ENCODE measurements at regions of chr7 and their contacts with region 1.

Region 1: DNA sequence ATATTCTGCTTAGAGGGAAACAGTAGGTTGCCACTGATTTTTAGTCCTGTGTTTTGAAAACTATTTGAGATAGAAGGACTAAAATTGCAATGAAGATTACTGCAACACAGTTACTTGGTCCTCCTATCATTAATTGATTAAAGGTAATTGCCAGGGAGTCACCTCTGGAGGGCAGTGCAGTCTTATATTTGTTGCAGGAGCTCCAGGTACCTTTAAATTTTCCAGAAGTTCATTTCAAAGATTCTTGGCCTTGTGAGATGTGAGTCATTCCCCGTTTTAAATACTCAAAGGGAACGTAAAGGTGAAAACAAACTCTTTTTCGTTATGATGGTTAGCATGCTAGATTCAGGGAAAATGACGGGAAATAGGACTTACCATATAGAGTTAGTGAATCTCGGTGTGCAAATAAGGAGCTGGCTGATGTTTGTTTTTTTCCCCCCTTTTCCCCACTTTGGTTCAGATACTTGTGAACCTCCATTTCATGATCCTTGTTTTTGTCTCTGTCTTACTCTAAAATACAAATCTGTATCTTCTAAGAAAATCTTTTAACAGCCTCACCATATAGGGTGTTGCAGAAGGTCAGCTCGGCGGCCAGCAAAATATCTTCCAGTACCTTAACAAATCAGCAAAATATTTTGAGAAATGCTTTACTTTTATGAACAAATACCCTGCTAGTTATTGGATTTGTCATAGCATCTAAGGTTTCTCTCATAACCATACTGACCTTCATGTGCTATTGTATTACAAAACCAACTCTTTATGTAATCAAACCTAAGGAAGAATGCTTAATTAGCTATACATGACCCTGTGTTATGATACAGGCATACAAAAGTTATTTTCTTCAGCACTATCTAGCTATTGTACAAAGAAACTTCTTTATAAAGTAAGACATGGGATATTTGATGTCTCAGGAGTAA is 143.0 kb upstream of the HDAC9 start:
- DNase-seq: peak in 1 of 3 donors; percentile 50
- ATAC-seq: peak; percentile 75
- H3K4me3 ChIP-seq: no peak overlapping the region
- H3K4me1 ChIP-seq: no peaks in the 10 kb centered on the region
- CTCF ChIP-seq: no peak

Region 2: GRCh38 chr7:18570890-18571478 is 218.4 kb after region 1 on chr7:
- intact Hi-C with region 1: loop called (anchors 5 to 10 kb)
- DNase-seq: peak in 1 of 3 donors; percentile 55
- ATAC-seq: peak; percentile 68
- H3K4me3 ChIP-seq: no peak overlapping the region
- H3K4me1 ChIP-seq: peaks cover 4% of the 10 kb centered on the region
- CTCF ChIP-seq: no peak

Region 3: DNA sequence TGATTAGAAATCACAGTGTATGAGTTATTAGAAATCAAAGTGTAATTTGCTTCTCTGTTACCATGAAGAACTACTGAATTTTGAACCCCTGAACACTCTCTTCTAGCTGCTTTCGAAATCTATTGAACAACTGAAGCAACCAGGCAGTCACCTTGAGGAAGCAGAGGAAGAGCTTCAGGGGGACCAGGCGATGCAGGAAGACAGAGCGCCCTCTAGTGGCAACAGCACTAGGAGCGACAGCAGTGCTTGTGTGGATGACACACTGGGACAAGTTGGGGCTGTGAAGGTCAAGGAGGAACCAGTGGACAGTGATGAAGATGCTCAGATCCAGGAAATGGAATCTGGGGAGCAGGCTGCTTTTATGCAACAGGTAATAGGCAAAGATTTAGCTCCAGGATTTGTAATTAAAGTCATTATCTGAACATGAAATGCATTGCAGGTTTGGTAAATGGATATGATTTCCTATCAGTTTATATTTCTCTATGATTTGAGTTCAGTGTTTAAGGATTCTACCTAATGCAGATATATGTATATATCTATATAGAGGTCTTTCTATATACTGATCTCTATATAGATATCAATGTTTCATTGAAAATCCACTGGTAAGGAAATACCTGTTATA is 313.6 kb after region 1 on chr7:
- intact Hi-C with region 1: loop called (anchors 5 to 10 kb)
- DNase-seq: peak; percentile 58 to 90 (median 74)
- ATAC-seq: peak; percentile 92
- H3K4me3 ChIP-seq: no peak overlapping the region
- H3K4me1 ChIP-seq: no peaks in the 10 kb centered on the region
- CTCF ChIP-seq: peak; percentile 79